ENCODE measurements at regions of chr11 and their contacts with region 1.

Region 1: GRCh38 chr11:5767056-5767455 is 13.0 kb downstream of the OR52N4 start:
- DNase-seq: no peak
- ATAC-seq: no peak
- H3K4me3 ChIP-seq: no peak overlapping the region
- H3K27ac ChIP-seq: no peak overlapping the region
- H3K4me1 ChIP-seq: no peaks in the 10 kb centered on the region
- H3K27me3 ChIP-seq: no peaks in the 10 kb centered on the region
- CTCF ChIP-seq: no peak
- POLR2A ChIP-seq: no peak

Region 2: GRCh38 chr11:5791165-5791564 is 24.1 kb after region 1 on chr11 and contains the start of gene OR52N1:
- intact Hi-C with region 1: loop called in 1 of 2 experiments (anchors 2 kb)
- DNase-seq: no peak
- ATAC-seq: no peak
- H3K4me3 ChIP-seq: no peak within 1 kb of the TSS
- H3K27ac ChIP-seq: no peak within 1 kb of the TSS
- H3K4me1 ChIP-seq: no peaks in the 10 kb centered on the region
- H3K27me3 ChIP-seq: no peaks in the 10 kb centered on the region
- CTCF ChIP-seq: no peak
- POLR2A ChIP-seq: no peak
- total RNA-seq, gene OR52N1: not detected

Region 3: DNA sequence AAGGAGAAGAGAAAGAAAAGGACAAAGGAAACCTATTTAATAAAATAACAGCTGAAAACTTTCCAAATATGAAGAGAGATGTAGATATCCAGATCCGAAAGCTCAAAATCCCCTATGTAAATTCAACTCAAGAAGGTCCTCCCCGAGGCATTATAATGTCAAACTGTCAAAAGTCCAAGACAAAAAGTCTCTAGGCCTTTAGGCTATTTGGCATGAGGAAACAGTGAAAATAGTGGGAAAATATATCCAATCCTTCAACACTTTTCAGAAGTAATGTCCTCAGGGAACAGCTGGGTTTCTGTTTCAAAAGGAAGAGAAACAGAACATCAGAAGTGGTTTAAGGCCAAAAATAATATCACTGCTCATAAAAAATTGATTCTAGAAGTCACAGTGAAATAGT is 111.5 kb after region 1 on chr11:
- intact Hi-C with region 1: no loop called
- DNase-seq: no peak
- ATAC-seq: no peak
- H3K4me3 ChIP-seq: no peak overlapping the region
- H3K27ac ChIP-seq: no peak overlapping the region
- H3K4me1 ChIP-seq: no peaks in the 10 kb centered on the region
- H3K27me3 ChIP-seq: no peaks in the 10 kb centered on the region
- CTCF ChIP-seq: no peak
- POLR2A ChIP-seq: no peak